ENCODE measurements at regions of chr7 and their contacts with region 1.

Region 1: DNA sequence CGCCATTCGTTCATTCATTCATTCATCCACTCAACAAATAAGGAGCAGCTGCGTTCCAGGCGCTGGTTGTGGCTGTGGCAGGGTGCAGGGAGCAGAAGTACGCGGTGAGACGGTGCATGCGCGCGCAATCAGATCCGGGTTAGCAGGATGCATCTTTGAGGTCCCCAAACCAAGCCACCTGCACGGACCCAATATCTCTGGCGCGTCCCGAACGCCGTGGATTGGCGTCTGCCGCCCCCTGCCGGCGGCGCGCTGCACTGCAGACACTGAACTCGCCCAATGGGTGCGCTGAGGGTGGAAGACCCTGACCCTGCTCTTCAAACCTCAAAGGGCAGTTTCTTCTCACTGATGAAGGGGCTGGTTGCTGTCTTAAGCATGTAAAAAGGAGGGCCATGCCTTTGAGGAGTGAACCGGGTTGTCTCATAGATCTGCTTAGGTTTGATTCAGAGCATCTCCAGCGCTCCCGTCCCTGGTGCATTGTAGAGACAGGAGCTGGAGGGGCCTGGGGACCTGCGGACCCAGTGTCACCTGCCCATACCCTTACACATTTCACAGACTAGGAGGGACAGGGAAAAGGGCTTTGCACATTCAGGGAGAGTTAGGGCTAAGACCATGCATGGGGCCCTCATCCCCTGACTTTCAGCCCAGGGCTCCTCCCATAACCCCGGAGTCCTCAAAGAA is 102.5 kb downstream of the RAMP3 start:
- DNase-seq: peak; percentile 67
- ATAC-seq: peak; percentile 76 to 79

Region 2: GRCh38 chr7:45157653-45158401 is 102.3 kb before region 1 on chr7 and contains the start of gene RAMP3:
- intact Hi-C with region 1: loop called (anchors 2 to 5 kb)
- DNase-seq: peak; percentile 58
- ATAC-seq: peak; percentile 35 to 60
- total RNA-seq, gene RAMP3: 40.8 to 55.0 TPM

Region 3: DNA sequence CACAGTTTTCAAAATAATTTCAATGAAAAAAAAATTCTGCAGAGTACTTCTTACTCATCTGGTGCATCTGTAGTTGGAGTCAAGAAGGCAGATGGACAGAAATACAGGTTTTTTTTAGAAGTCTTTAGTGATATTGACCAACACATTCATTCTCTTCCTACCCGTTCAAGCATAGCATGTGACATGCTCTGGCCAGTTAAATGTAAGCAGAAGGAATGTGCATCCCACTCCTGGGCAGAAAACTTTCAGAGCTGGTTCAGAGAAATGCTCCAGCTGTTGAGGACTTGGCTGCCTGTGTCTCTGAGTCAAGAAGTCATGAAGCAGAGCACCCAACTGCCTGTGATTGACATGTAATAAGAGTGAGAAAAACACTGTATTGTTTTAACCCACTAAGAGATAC is 1326.3 kb after region 1 on chr7:
- intact Hi-C with region 1: no loop called
- DNase-seq: no peak
- ATAC-seq: peak; percentile 53 to 56